ENCODE measurements at regions of chr13 and their contacts with region 1.

Region 1: DNA sequence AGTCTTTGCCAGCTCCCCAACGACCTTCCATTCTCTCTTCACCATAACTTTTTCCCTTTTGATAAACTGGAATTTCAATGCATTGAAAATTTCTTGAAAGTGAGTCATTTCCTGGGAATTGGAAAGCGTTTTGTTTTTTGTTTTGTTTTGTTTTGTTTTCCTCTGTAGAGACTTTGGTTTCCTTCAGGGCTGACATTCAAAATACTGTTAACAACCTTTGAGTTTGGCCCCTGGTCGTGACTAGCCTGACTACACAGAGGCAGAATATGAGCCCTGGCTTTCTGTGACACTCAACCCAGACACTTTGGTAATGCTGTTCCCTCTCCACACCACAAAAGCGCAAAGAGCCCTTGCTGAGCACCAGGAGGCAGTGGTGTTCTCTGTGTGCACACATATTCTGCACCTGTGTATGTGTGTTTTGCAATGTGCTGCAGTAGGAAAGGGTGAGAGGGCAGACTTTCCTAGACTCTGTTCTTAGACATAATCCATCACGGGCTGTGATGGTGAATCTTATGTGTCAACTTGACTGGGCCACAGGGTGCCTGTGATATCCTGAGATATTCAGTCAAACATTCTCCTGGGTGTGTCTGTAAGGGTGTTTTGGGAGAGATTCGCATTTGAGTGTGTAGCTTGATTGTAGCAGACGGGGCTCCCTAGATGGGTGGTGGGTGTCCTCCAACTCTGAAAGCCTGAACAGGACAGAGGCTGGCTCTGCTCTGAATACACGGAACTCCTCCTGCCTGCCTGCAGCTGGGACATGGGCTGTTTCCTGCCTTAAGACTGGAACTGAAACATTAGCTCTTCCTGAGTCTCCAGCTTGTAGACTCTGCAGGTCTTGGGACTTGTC is 29.5 kb upstream of the ANKRD10 start:
- DNase-seq: peak; percentile 28
- H3K4me3 Mint-ChIP-seq: no peak overlapping the region
- H3K27ac Mint-ChIP-seq: peak overlapping the region; percentile 61
- H3K4me1 Mint-ChIP-seq: no peaks in the 10 kb centered on the region
- H3K27me3 Mint-ChIP-seq: no peaks in the 10 kb centered on the region
- CTCF ChIP-seq: no peak

Region 2: GRCh38 chr13:110801046-110801445 is 143.3 kb before region 1 on chr13:
- CTCF ChIA-PET with region 1: no interaction called
- intact Hi-C with region 1: no loop called
- DNase-seq: no peak
- H3K4me3 Mint-ChIP-seq: no peak overlapping the region
- H3K27ac Mint-ChIP-seq: no peak overlapping the region
- H3K4me1 Mint-ChIP-seq: no peaks in the 10 kb centered on the region
- H3K27me3 Mint-ChIP-seq: peaks cover 28% of the 10 kb centered on the region
- CTCF ChIP-seq: no peak

Region 3: GRCh38 chr13:111049802-111050538 is 105.6 kb after region 1 on chr13:
- CTCF ChIA-PET with region 1: interaction called, 5 read pairs
- intact Hi-C with region 1: loop called (anchors 2 kb)
- DNase-seq: peak; percentile 20
- H3K4me3 Mint-ChIP-seq: no peak overlapping the region
- H3K27ac Mint-ChIP-seq: no peak overlapping the region
- H3K4me1 Mint-ChIP-seq: no peaks in the 10 kb centered on the region
- H3K27me3 Mint-ChIP-seq: no peaks in the 10 kb centered on the region
- CTCF ChIP-seq: no peak

Region 4: GRCh38 chr13:111115965-111116500 is 171.7 kb after region 1 on chr13:
- CTCF ChIA-PET with region 1: no interaction called
- intact Hi-C with region 1: no loop called
- DNase-seq: no peak
- H3K4me3 Mint-ChIP-seq: peak overlapping the region; percentile 49
- H3K27ac Mint-ChIP-seq: no peak overlapping the region
- H3K4me1 Mint-ChIP-seq: no peaks in the 10 kb centered on the region
- H3K27me3 Mint-ChIP-seq: peaks cover 57% of the 10 kb centered on the region
- CTCF ChIP-seq: no peak